PC-9 (cell line): ENCODE measurements at regions of chr17 and their contacts with region 1.

Region 1: DNA sequence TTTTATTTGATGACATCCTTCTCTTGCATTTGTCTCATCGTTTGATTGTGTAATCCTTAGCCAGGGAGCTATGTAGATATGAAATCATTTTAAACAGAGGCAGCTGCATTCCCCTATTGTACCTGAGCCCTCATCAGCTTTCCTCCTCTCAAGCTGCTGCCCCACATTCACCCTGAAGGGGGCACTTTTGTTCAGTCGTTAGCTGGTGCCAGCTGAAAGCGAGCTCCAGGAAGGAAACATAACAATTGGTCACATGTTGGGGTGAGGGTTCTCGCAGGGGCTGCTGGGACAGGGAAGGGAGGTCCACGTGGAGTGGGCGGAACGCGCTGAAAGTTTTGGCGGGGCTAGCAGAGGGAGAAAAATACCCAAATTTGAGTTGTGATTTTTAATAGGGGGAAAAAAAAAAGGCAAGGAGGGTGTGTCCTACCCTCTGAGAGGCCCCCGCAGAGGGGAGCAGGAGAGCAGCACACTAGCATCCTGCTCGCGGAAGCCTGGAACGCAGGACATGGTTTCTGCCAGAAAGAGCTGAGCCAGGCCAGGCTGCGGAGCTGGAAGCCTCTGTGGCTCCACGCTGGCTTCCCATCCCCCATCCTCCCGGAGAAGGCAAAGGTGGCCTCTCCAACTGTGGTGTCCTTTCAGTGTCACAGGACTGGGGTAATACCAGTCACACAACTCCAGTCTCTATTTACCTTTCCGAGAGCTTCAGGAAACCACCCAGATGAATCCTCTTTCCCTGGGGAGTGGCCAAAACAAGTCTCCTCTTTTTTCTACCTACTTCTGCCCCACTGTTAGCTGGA is 8.5 kb upstream of the MSL1 start:
- DNase-seq: peak; percentile 88 to 89
- H3K4me3 ChIP-seq: peak overlapping the region; percentile 47; the same call in 1 of the 2 replicates
- H3K27ac ChIP-seq: peak overlapping the region; percentile 82
- H3K4me1 ChIP-seq: peaks cover 38% of the 10 kb centered on the region
- H3K27me3 ChIP-seq: no peaks in the 10 kb centered on the region
- CTCF ChIP-seq: peak; percentile 86

Region 2: DNA sequence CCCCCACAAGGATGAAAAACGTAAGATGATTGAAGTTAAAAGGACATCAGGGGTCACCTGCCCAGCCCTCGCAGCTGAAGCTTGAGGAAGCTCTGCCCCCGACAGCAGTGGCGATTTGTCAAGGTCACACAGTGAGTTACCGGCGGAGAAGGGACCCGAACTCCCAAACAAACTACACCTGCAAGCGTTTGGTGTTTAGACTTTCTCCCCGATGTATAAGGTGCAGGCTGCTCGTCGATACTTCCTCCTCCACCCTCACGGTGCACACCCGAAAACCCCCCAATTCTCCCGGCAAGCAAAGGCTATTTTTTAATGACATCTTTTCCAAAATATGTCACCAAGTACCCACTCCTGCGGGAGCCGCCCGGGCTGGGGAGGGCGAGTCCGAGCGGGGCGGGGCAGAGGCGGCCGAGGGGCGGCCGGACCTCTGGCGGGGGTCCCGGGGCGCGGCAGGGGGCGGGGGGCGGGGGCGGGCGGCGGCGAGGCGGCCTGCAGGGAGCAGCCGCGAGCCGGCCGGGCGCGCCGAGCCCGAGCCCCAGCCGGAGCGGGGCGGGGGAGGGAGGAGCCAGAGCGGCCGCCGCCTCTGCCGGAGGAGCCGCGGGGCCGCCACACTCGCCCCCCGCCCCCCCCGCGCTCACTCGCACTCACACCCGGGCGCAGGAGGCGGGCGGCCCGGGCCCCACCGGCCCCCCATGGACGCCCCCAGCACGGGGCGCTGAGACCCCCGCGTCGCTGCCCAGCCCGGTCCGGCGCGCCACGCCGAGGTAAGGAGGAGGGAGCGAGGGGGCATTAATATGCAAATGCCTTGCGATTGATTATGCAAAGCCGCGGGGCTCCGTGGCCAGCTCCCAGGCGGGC is 50.8 kb before region 1 on chr17 and contains the start of gene THRA:
- CTCF ChIA-PET with region 1: no interaction called
- POLR2A ChIA-PET with region 1: interaction called, 4 read pairs
- intact Hi-C with region 1: loop called (anchors 5 kb)
- DNase-seq: peak in 1 of 2 experiments; percentile 60
- H3K4me3 ChIP-seq: peak within 1 kb of the TSS; percentile 95
- H3K27ac ChIP-seq: no peak within 1 kb of the TSS
- H3K4me1 ChIP-seq: peaks cover 24% of the 10 kb centered on the region; the same call in 1 of the 2 replicates
- H3K27me3 ChIP-seq: peaks cover 8% of the 10 kb centered on the region; the same call in 1 of the 2 replicates
- CTCF ChIP-seq: peak; percentile 35; the same call in 1 of the 2 replicates
- total RNA-seq, gene THRA: 11.4 and 13.9 TPM in 2 replicates

Region 3: GRCh38 chr17:40100669-40101366 is 12.5 kb before region 1 on chr17:
- CTCF ChIA-PET with region 1: interaction called, 8 read pairs
- POLR2A ChIA-PET with region 1: interaction called, 17 read pairs
- intact Hi-C with region 1: no loop called
- DNase-seq: peak; percentile 96 to 98
- H3K4me3 ChIP-seq: peak overlapping the region; percentile 89; the same call in 1 of the 2 replicates
- H3K27ac ChIP-seq: peak overlapping the region; percentile 81
- H3K4me1 ChIP-seq: peaks cover 57% of the 10 kb centered on the region
- H3K27me3 ChIP-seq: no peaks in the 10 kb centered on the region
- CTCF ChIP-seq: no peak

Region 4: DNA sequence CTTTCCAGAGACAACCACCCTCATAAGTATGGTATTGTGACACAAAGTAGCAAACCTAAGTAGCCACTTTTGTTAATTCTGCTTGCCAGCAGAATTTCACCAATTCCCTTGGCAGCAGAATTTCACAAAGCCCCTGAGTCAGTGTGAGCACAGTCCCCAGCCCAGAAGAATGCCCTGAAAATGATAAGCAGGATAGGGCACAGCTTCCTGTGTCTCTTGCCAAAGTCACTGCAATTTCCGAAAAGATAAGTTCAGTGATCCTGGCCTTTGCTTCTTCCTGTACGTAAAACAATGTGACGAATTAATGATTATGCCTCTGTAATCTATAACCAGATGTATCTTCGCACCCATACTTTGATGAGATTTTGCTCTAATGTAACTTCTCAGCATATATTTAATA is 89.8 kb after region 1 on chr17:
- CTCF ChIA-PET with region 1: interaction called, 20 read pairs
- POLR2A ChIA-PET with region 1: no interaction called
- intact Hi-C with region 1: no loop called
- DNase-seq: no peak
- H3K4me3 ChIP-seq: no peak overlapping the region
- H3K27ac ChIP-seq: no peak overlapping the region
- H3K4me1 ChIP-seq: no peaks in the 10 kb centered on the region
- H3K27me3 ChIP-seq: no peaks in the 10 kb centered on the region
- CTCF ChIP-seq: no peak

Region 5: DNA sequence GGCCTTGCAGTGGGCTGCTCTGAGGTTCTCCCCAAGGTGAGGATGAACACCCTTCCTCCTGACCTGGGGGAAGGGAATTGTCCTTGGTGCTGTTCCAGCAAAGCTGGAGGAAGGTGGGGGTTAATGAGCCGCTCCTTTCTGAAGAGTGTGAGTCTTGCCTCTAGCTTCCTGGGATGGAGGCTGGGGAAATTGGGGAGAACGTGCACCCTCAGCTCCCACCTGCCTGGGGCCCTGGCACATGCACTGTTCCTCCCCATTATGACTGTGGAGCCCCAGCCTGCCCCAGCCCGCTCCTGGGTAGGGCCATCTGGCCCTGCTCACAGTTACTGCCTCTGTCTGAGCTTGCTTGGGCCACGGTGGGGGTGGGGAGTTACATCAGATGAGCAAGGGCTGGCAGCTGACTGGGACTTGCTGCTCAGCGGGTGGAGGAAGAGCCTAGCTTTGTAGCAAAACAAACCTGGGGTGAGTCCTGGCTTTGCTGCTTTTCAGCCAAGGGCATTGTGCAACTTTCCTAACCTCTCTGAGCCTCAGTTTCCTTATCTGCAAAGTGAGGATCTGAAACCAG is 377.1 kb after region 1 on chr17:
- CTCF ChIA-PET with region 1: no interaction called
- POLR2A ChIA-PET with region 1: interaction called, 12 read pairs
- intact Hi-C with region 1: no loop called
- DNase-seq: peak; percentile 57 to 62
- H3K4me3 ChIP-seq: peak overlapping the region; percentile 42; the same call in 1 of the 2 replicates
- H3K27ac ChIP-seq: peak overlapping the region; percentile 88
- H3K4me1 ChIP-seq: peaks cover 89% of the 10 kb centered on the region
- H3K27me3 ChIP-seq: no peaks in the 10 kb centered on the region
- CTCF ChIP-seq: no peak